H1 (cell line): ENCODE measurements at regions of chr1 and their contacts with region 1.

Region 1: GRCh38 chr1:212749821-212750535 is 41.6 kb downstream of the NSL1 start:
- DNase-seq: no peak
- H3K4me3 ChIP-seq: no peak overlapping the region
- H3K27ac ChIP-seq: no peak overlapping the region
- H3K4me1 ChIP-seq: peaks cover 0 to 10% (median 8%) of the 10 kb centered on the region in 4 experiments; a peak in 5 of 7 replicates
- H3K27me3 ChIP-seq: no peaks in the 10 kb centered on the region
- CTCF ChIP-seq: peak in 2 of 3 experiments; percentile 68 to 80; a peak in 3 of 4 replicates
- EP300 ChIP-seq: no peak
- POLR2A ChIP-seq: no peak
- RAD21 ChIP-seq: peak; percentile 48 to 64

Region 2: DNA sequence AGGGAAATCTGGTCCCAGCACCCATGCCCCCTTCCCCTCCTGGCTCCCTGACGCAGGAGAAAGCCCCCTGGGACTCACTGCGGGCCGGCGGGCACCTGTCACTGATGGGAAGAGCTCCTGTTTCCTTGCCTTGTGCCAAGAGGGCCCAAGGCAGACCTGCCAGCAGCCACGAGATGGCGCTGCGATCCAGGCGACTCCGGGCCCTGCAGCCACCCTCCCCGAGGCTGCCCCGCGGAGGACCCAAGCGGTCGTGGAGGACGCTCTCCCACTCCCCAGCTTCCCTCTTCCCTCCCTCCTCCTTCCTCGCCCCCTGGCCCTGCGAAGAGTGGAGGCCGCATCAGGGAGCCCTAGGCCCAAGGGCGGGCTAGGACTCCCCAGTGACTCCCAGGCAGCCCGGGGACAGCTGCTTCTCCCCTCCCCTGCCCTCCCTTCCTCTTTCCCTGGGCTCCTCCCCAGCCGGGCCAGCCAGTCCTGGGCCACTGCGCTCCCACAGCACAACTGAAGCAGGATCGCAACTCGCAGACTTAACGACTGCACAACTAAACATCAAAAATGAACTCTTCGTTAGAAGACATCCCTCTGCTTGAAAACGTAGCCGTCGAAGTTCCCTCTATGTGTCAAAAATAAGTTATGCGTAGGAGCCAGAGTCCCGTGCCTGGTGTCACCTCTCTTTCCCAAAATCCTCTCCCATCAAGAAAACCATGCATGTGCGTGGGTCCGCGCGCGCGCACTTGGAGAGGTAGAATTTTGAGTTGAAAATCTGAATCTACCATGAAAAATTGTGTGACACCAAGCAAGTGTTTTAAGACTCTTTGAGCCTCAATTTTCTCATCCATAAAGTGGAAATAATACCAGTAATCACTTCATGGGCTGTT is 84.5 kb before region 1 on chr1:
- CTCF ChIA-PET with region 1: interaction called, 17 read pairs
- POLR2A ChIA-PET with region 1: no interaction called
- DNase-seq: peak in 1 of 2 experiments; percentile 95
- H3K4me3 ChIP-seq: peak overlapping the region; percentile 34 to 77 (median 62)
- H3K27ac ChIP-seq: no peak overlapping the region
- H3K4me1 ChIP-seq: no peaks in the 10 kb centered on the region; a peak in 1 of 7 replicates
- H3K27me3 ChIP-seq: peaks cover 0 to 9% (median 5%) of the 10 kb centered on the region in 4 experiments; a peak in 4 of 7 replicates
- CTCF ChIP-seq: peak; percentile 95 to 96 (median 96)
- EP300 ChIP-seq: no peak
- POLR2A ChIP-seq: no peak
- RAD21 ChIP-seq: peak; percentile 90 to 94

Region 3: GRCh38 chr1:212728606-212729005 is 21.4 kb before region 1 on chr1:
- CTCF ChIA-PET with region 1: interaction called, 10 read pairs
- POLR2A ChIA-PET with region 1: no interaction called
- DNase-seq: no peak
- H3K4me3 ChIP-seq: no peak overlapping the region
- H3K27ac ChIP-seq: no peak overlapping the region
- H3K4me1 ChIP-seq: no peaks in the 10 kb centered on the region
- H3K27me3 ChIP-seq: no peaks in the 10 kb centered on the region
- CTCF ChIP-seq: no peak
- EP300 ChIP-seq: no peak
- POLR2A ChIP-seq: no peak
- RAD21 ChIP-seq: no peak

Region 4: DNA sequence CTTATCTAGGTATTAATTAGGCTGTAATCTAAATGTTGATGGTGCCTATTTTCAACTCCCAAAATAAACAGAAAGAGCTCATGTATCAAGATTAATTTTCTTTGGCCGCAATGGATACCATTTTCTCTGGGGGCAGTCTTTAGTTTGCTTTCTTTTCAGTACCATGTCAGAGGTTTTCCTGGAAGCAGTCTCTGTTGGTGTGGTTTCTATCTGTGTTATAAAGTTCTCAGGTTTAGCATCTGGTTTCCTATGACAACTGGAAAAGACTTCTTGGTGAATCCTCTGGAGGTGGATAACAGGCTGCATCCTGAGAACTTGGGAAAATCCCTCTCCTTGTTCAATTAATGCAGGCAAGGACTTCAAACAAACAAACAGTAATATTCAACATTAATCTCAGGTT is 11.6 kb before region 1 on chr1:
- CTCF ChIA-PET with region 1: interaction called, 21 read pairs
- POLR2A ChIA-PET with region 1: no interaction called
- DNase-seq: no peak
- H3K4me3 ChIP-seq: no peak overlapping the region
- H3K27ac ChIP-seq: no peak overlapping the region
- H3K4me1 ChIP-seq: no peaks in the 10 kb centered on the region
- H3K27me3 ChIP-seq: no peaks in the 10 kb centered on the region
- CTCF ChIP-seq: no peak
- EP300 ChIP-seq: no peak
- POLR2A ChIP-seq: no peak
- RAD21 ChIP-seq: no peak

Region 5: DNA sequence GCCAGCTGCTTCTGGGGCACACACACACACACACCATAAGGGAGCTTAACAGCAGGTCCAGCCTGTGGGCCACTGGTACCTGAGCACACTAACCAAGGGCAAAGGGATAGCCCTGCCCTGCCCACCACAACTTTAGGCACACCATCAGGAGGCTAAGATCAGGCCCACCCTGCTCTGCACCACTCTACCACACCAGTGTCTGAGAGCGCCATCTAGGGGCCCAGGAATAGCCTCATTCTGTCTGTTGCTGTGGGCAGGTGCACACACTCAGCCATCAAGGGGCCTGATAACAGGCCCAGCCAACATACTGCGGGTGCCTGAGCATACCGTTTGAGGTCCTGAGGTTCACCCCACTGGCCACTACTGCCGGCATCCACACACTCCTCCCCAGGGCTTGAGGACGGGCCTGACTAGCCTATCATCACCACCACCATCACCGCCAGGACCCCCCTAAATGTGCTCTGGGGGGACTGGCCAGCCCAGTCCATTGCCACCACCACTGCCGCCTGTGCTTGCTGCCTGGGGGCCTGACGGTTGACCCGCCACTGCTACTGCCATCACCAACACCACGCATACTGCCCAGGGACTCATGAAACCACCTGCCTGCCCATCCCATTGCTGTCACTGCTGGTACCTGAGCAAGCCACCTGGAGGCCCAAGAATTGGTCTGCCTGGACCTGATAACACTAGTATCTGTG is 10.3 kb after region 1 on chr1:
- CTCF ChIA-PET with region 1: interaction called, 36 read pairs
- POLR2A ChIA-PET with region 1: interaction called, 3 read pairs
- DNase-seq: peak in 1 of 2 experiments; percentile 83
- H3K4me3 ChIP-seq: no peak overlapping the region
- H3K27ac ChIP-seq: no peak overlapping the region
- H3K4me1 ChIP-seq: peaks cover 0 to 3% (median 0%) of the 10 kb centered on the region in 4 experiments; a peak in 1 of 7 replicates
- H3K27me3 ChIP-seq: no peaks in the 10 kb centered on the region
- CTCF ChIP-seq: peak; percentile 79 to 94 (median 92)
- EP300 ChIP-seq: no peak
- POLR2A ChIP-seq: no peak
- RAD21 ChIP-seq: peak; percentile 65 to 78

Region 6: DNA sequence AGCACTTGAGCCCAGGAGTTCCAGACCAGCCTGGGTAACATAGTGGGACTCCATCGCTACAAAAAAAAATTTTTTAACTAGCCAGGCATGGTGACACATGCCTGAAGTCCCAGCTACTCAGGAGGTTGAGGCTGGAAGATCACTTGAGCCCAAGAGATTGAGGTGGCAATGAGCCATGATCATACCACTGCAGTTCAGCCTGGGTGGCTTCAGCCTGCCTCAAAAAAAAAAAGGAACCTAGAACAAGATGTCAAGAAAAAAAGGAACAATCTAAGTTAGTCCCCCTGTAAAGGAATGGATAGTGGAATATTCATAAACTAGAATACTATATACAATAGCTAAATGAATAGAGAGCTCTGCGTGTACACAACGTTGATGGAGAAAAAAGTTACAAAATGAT is 27.2 kb after region 1 on chr1:
- CTCF ChIA-PET with region 1: interaction called, 21 read pairs
- POLR2A ChIA-PET with region 1: no interaction called
- DNase-seq: no peak
- H3K4me3 ChIP-seq: no peak overlapping the region
- H3K27ac ChIP-seq: no peak overlapping the region
- H3K4me1 ChIP-seq: no peaks in the 10 kb centered on the region
- H3K27me3 ChIP-seq: no peaks in the 10 kb centered on the region
- CTCF ChIP-seq: no peak
- EP300 ChIP-seq: no peak
- POLR2A ChIP-seq: no peak
- RAD21 ChIP-seq: no peak